Activated CD4-positive, alpha-beta T cell treated with anti-CD3 and anti-CD28 coated beads, Interleukin-2, amount 10 ng/mL, durations not matched to agents 24 days and 14 days (primary cell): ENCODE measurements at regions of chr6 and their contacts with region 1.

Region 1: DNA sequence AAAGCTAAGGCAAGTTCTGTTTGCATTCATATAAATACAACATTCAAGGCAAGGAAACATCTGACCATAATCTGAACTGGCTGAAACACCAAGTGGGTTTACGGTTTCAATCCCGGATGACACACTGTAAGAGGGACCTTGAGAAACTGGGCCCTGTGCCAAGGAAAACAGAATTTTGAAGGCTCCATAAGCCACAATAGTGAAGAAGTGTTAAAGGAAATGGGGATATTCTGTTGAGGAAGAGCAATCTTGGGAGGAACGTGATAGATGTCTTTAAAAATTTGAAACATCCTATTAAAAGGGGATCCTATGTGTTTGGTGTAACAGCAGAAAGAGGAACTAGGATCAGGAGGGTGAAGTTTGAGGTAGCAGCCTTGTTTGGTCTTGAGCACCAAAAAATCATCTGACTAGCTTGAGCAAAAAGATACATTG is 82.4 kb upstream of the TAB2 start:
- DNase-seq: no peak
- H3K4me3 Mint-ChIP-seq: peak overlapping the region; percentile 74
- H3K27ac Mint-ChIP-seq: peak overlapping the region; percentile 98
- H3K4me1 Mint-ChIP-seq: peaks cover 53% of the 10 kb centered on the region
- H3K27me3 Mint-ChIP-seq: no peaks in the 10 kb centered on the region

Region 2: GRCh38 chr6:149075616-149076364 is 159.4 kb before region 1 on chr6:
- intact Hi-C with region 1: loop called (anchors 1 kb)
- DNase-seq: peak; percentile 68
- H3K4me3 Mint-ChIP-seq: peak overlapping the region; percentile 10
- H3K27ac Mint-ChIP-seq: peak overlapping the region; percentile 87
- H3K4me1 Mint-ChIP-seq: peaks cover 45% of the 10 kb centered on the region
- H3K27me3 Mint-ChIP-seq: no peaks in the 10 kb centered on the region

Region 3: DNA sequence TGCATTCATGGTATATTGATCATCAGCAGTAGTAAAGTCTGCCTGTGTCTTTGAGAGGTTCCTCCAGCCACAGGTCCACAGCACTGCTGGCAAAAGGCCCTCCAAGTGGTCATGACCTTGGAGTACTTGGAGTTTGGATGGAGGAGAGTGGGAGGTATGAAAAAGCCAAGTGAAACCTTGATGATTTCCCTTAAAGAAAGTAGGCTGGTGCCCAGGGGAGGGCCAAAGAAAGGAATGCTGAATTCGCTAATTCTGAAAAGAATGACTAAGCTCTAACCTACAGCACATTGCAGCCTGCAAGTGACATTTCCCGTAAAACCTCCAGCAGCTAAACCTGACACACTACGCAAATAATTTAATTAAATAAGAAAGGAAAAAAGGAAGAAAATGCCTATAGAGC is 141.0 kb before region 1 on chr6:
- intact Hi-C with region 1: loop called (anchors 1 kb)
- DNase-seq: peak; percentile 76
- H3K4me3 Mint-ChIP-seq: peak overlapping the region; percentile 71
- H3K27ac Mint-ChIP-seq: peak overlapping the region; percentile 95
- H3K4me1 Mint-ChIP-seq: peaks cover 74% of the 10 kb centered on the region
- H3K27me3 Mint-ChIP-seq: no peaks in the 10 kb centered on the region

Region 4: GRCh38 chr6:149147938-149148718 is 87.0 kb before region 1 on chr6:
- intact Hi-C with region 1: loop called (anchors 1 kb)
- DNase-seq: peak; percentile 85
- H3K4me3 Mint-ChIP-seq: peak overlapping the region; percentile 70
- H3K27ac Mint-ChIP-seq: peak overlapping the region; percentile 94
- H3K4me1 Mint-ChIP-seq: peaks cover 80% of the 10 kb centered on the region
- H3K27me3 Mint-ChIP-seq: no peaks in the 10 kb centered on the region

Region 5: GRCh38 chr6:149218471-149218870 is 16.7 kb before region 1 on chr6:
- intact Hi-C with region 1: loop called (anchors 1 kb)
- DNase-seq: peak; percentile 73
- H3K4me3 Mint-ChIP-seq: peak overlapping the region; percentile 38
- H3K27ac Mint-ChIP-seq: peak overlapping the region; percentile 78
- H3K4me1 Mint-ChIP-seq: peaks cover 40% of the 10 kb centered on the region
- H3K27me3 Mint-ChIP-seq: no peaks in the 10 kb centered on the region

Region 6: GRCh38 chr6:149271348-149272340 is 36.5 kb after region 1 on chr6:
- intact Hi-C with region 1: loop called (anchors 1 kb)
- DNase-seq: peak; percentile 74
- H3K4me3 Mint-ChIP-seq: peak overlapping the region; percentile 60
- H3K27ac Mint-ChIP-seq: peak overlapping the region; percentile 94
- H3K4me1 Mint-ChIP-seq: peaks cover 37% of the 10 kb centered on the region
- H3K27me3 Mint-ChIP-seq: no peaks in the 10 kb centered on the region

Region 7: GRCh38 chr6:149431905-149432775 is 197.0 kb after region 1 on chr6:
- intact Hi-C with region 1: loop called (anchors 5 kb)
- DNase-seq: peak; percentile 97
- H3K4me3 Mint-ChIP-seq: peak overlapping the region; percentile 69
- H3K27ac Mint-ChIP-seq: peak overlapping the region; percentile 92
- H3K4me1 Mint-ChIP-seq: peaks cover 16% of the 10 kb centered on the region
- H3K27me3 Mint-ChIP-seq: no peaks in the 10 kb centered on the region

Region 8: DNA sequence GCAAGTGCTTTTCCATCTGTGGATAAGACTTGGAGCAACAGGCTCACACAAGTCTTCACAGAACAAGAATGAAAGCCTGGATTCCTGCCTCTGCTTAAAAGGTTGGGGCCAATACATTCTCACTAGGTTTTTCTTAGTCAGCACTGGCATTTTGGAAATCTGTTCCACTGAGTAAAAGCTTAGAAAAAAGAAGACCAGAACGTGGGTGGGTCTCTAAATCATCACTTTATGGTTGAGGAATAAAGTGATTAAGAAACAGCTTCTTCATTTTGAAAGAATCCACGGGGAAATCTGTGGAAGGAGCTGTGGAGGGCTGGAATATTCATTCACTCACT is 918.4 kb after region 1 on chr6:
- intact Hi-C with region 1: no loop called
- DNase-seq: no peak
- H3K4me3 Mint-ChIP-seq: no peak overlapping the region
- H3K27ac Mint-ChIP-seq: no peak overlapping the region
- H3K4me1 Mint-ChIP-seq: peaks cover 14% of the 10 kb centered on the region
- H3K27me3 Mint-ChIP-seq: peaks cover 56% of the 10 kb centered on the region